Ovary (tissue), 10 donors: ENCODE measurements at regions of chr2 and their contacts with region 1.

Region 1: DNA sequence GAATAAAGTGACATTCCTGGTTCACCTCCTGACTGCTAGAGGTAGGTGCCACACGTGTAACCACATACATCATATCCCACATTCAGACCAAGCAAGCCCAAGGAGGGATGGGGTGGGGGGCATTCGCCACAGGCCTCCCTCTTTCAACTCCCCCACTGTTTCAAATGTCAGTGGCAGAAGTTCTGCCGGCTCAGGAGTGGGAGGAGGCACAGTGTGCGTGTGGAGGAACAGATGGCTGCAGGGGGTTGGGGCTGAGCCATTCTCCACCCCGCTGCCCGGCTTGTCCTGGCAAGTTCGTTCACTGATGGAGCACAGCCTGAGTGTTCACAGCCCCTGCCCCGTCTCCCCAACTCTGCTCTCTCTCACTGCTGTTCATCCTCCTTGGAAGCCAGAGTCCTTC is 75.4 kb upstream of the TANC1 start:
- DNase-seq: peak in 4 of 5 donors; percentile 17 to 53 (median 33)
- H3K4me3 ChIP-seq: no peak overlapping the region
- H3K27ac ChIP-seq: no peak overlapping the region
- H3K4me1 ChIP-seq: peaks cover 4% of the 10 kb centered on the region
- H3K27me3 ChIP-seq: no peaks in the 10 kb centered on the region
- CTCF ChIP-seq: no peak
- EP300 ChIP-seq: no peak
- POLR2A ChIP-seq: no peak

Region 2: GRCh38 chr2:158740621-158741020 is 152.4 kb before region 1 on chr2:
- intact Hi-C with region 1: no loop called
- DNase-seq: no peak
- H3K4me3 ChIP-seq: no peak overlapping the region
- H3K27ac ChIP-seq: no peak overlapping the region
- H3K4me1 ChIP-seq: peaks cover 15% of the 10 kb centered on the region
- H3K27me3 ChIP-seq: no peaks in the 10 kb centered on the region
- CTCF ChIP-seq: no peak
- EP300 ChIP-seq: no peak
- POLR2A ChIP-seq: no peak

Region 3: DNA sequence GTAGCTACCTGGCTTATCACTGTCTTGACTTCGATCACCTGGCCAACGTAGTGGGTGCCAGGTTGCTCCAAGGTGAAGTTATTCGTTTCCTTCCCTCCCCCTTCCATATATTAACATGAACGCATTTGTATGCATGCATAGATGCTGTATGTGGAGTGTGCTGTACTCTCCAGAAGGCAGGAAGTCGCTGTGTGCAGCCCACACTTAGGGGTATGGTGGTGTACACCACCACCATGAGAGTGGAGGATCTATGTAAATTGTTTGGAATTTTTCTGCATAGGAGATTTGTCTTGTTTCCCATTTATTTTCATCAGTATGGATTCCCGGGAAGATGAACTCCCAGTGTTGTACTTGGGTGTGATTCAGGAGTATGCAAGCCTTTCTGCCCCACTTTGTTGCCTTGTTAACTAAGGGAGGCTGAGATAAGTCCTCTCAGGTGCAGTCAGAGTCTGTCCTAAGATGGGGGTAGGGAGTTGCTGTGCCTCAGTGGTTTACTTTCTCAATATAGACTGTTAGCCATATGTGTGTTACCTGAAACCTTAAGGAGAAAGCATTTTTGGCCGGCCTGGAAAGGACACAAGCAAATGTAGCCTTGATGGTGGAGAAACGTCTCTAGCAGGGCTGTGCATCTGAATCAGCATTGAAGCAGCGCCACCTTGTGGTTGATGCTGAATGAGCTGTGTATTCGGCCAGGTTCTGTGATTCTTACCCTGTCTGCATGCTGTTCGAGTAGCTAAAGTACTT is 225.3 kb after region 1 on chr2:
- intact Hi-C with region 1: loop called in 1 of 4 experiments (anchors 2 kb)
- DNase-seq: peak; percentile 84 to 92 (median 91)
- H3K4me3 ChIP-seq: no peak overlapping the region
- H3K27ac ChIP-seq: no peak overlapping the region
- H3K4me1 ChIP-seq: no peaks in the 10 kb centered on the region
- H3K27me3 ChIP-seq: no peaks in the 10 kb centered on the region
- CTCF ChIP-seq: peak; percentile 81 to 92 (median 90)
- EP300 ChIP-seq: no peak
- POLR2A ChIP-seq: no peak